ENCODE measurements at regions of chr11 and their contacts with region 1.

Region 1: GRCh38 chr11:27698872-27699474 is 1.3 kb downstream of the BDNF start:
- DNase-seq: peak; percentile 90
- H3K27ac ChIP-seq: peak overlapping the region; percentile 48
- CTCF ChIP-seq: peak; percentile 90

Region 2: GRCh38 chr11:26331911-26332571 is 1366.9 kb before region 1 on chr11 and contains the start of gene ANO3:
- CTCF ChIA-PET with region 1: no interaction called
- POLR2A ChIA-PET with region 1: no interaction called
- DNase-seq: peak; percentile 80
- H3K27ac ChIP-seq: no peak within 1 kb of the TSS
- CTCF ChIP-seq: peak; percentile 53

Region 3: GRCh38 chr11:27688076-27688475 is 10.9 kb before region 1 on chr11:
- CTCF ChIA-PET with region 1: no interaction called
- POLR2A ChIA-PET with region 1: no interaction called
- DNase-seq: no peak
- H3K27ac ChIP-seq: no peak overlapping the region
- CTCF ChIP-seq: no peak

Region 4: DNA sequence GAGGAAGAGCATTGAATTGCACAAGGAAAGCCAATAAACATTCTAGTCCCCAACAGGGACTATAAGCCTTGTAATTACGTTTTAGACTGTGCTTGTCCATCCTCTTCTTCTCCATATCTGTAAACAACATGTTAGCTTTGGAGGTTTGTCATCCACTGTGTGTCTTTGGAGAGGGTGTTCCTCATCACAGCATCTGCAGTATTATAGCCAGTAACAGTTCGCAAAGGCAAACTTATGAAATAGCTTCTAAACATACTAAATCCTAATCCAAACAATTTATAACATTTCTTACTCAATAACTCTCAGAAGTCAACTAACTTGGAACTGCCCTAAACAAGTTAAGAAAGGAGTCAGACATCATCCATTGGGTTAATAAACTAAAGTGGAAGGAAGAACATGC is 11.6 kb after region 1 on chr11:
- CTCF ChIA-PET with region 1: interaction called, 13 read pairs
- POLR2A ChIA-PET with region 1: no interaction called
- DNase-seq: no peak
- H3K27ac ChIP-seq: no peak overlapping the region
- CTCF ChIP-seq: no peak

Region 5: DNA sequence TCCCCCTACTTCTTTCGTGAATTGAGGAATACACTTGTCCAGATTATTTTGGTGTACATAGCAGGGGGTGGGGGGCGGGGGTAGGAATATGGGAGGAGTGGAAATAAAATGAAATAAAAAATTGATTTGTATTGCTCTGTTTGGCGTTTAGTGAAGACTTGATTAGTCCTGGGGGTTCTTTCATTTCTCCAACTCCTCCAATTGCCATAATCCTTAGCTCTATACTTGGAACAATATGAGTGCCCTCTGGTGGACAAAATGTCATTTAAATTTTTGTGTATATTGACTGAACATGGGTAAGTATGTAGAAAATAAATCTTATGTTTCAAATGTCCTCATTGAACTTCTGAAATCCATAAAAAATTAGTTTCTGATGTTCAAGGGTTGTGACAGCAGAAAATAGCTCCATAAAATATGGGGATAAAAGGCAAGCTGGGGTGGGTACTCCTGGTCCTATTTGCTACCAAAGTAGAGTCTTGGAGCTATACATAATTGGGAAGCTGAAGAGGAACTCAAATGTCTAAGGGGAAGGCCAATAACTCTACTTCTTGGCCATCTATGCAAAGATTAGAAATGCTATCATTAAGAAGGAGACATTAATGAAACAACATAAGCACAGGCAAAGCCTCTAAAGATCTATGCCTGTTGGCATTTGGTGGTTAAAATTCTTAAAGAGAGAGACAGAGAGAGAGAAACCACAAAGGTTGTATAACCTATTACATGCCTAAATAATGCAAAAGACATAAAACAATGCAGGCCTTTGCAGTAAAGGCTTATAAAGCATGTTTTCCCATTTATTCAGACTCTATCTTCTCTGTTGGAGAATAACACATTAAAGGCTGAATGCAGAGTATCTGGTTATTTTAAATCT is 830.8 kb after region 1 on chr11:
- CTCF ChIA-PET with region 1: interaction called, 21 read pairs
- POLR2A ChIA-PET with region 1: no interaction called
- DNase-seq: peak; percentile 20
- H3K27ac ChIP-seq: no peak overlapping the region
- CTCF ChIP-seq: peak; percentile 27

Region 6: DNA sequence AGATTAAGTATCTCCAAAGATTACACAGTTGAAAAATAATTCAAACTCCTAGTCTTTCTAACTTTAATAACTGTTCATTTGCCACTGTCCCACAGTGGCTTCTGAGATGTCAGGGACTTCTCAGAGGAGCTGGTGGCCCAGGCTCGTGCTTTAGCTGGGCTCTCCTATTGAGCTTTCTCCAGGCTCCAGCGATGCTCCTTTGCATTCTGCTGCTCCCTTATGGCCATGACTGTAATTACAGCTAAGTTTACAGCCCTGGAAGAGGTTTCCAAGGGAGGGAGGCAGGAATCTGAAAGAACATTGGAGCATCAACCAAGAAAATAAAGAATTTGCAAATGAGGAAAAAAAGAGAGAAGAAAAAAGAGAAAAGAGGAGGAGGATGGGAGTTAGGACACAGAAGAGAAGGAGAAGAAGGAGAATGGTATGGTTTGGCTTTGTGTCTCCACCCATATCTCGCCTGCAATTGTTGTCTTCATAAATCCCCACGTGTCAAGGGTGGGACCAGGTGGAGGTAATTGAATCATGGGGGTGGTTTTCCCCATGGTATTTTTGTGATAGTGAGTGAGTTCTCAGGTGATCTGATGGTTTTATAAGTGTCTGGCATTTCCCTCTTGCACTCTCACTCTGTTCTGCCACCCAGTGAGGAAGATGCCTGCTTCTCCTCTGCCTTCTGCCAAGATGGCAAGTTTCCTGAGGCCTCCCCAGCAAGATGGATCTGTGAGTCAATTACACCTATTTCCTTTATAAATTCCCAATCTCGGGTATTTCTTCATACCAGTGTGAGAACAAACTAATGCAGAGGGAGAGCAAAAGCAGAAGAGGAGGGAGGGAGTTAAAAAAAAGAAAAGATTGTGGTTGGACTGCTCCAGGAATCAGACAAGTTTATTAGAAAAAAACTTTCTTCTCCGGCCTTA is 1460.8 kb after region 1 on chr11:
- CTCF ChIA-PET with region 1: interaction called, 12 read pairs
- POLR2A ChIA-PET with region 1: no interaction called
- DNase-seq: peak; percentile 64
- H3K27ac ChIP-seq: no peak overlapping the region
- CTCF ChIP-seq: peak; percentile 76

Region 7: GRCh38 chr11:29328961-29329441 is 1630.0 kb after region 1 on chr11:
- CTCF ChIA-PET with region 1: interaction called, 15 read pairs
- POLR2A ChIA-PET with region 1: no interaction called
- DNase-seq: peak; percentile 45
- H3K27ac ChIP-seq: no peak overlapping the region
- CTCF ChIP-seq: peak; percentile 71